Activated CD4-positive, alpha-beta T cell treated with anti-CD3 and anti-CD28 coated beads, Interleukin-2, amount 10 ng/mL, durations not matched to agents 7 days and 5 days (primary cell): ENCODE measurements at regions of chr11 and their contacts with region 1.

Region 1: GRCh38 chr11:67401495-67402191 is at the start of gene PPP1CA:
- DNase-seq: peak; percentile 90
- H3K4me3 Mint-ChIP-seq: peak within 1 kb of the TSS; percentile 95
- H3K27ac Mint-ChIP-seq: peak within 1 kb of the TSS; percentile 97
- H3K4me1 Mint-ChIP-seq: peaks cover 61% of the 10 kb centered on the region
- H3K27me3 Mint-ChIP-seq: no peaks in the 10 kb centered on the region
- total RNA-seq, gene PPP1CA: 301 to 331 TPM

Region 2: DNA sequence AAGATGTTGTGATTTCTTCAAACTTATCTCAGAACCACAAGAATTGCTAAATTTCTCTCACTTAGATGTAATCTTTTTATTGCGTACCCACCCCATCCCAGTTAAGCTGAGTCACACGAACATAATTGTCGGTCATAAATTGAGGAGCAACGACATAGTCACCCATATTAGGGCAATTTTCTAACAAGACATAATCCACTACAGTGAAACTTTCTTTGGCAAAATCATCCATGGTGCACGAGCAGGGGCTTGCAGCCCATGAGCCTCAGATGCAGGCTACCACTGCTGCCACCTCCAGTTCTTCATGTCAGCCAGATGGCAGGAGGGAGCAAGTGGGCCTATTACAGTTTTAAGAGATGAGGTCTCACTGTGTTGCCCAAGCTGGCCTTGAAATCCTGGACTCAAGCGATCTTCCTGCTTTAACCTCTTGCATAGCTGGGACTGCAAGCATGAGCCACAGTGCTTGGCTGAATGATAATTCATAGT is 205.6 kb before region 1 on chr11:
- CTCF ChIA-PET with region 1: no interaction called
- POLR2A ChIA-PET with region 1: no interaction called
- DNase-seq: no peak
- H3K4me3 Mint-ChIP-seq: no peak overlapping the region
- H3K27ac Mint-ChIP-seq: no peak overlapping the region
- H3K4me1 Mint-ChIP-seq: peaks cover 4% of the 10 kb centered on the region
- H3K27me3 Mint-ChIP-seq: no peaks in the 10 kb centered on the region

Region 3: DNA sequence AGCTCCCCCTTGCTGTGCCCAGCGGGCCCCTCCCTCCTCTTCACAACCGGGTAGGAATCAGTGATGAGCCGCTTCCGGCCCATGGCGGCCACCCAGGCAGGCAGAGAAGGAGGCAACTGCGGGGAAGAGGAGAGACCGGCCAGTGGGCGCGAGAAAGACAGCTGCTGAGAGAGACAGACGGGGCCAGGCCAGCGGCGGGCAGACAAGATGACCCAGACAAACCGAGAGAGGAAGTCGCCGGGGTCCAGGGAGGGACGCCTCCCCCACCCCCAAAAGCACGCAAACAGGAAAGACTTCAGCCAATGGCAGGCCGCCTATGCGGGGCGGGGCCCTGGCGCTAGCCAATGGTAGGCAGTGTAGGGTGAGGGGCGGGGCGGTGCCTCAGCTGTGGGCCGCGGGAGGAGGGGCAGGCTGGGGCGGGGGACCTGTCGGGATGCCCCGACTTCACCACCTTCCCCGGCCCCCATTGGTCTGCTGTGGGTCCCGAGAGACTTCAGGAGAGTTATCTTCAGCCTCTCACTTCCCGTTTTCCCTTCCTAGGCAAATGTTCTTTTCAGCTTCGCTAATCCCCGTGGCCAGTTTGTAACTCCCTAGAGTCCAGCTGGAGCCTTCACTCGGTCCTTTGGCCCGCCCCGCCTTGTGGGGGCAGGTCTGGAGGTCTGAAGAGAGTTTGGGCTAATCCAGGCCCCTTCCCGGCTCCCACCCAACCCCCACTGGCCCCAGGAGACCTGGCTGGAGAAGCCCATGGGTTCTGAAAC is 48.1 kb before region 1 on chr11 and contains the start of gene POLD4:
- CTCF ChIA-PET with region 1: interaction called, 841 read pairs
- POLR2A ChIA-PET with region 1: interaction called, 5 read pairs
- DNase-seq: peak; percentile 97
- H3K4me3 Mint-ChIP-seq: peak within 1 kb of the TSS; percentile 89
- H3K27ac Mint-ChIP-seq: peak within 1 kb of the TSS; percentile 99
- H3K4me1 Mint-ChIP-seq: peaks cover 36% of the 10 kb centered on the region
- H3K27me3 Mint-ChIP-seq: peaks cover 8% of the 10 kb centered on the region
- total RNA-seq, gene POLD4: 52.7 to 53.7 TPM

Region 4: DNA sequence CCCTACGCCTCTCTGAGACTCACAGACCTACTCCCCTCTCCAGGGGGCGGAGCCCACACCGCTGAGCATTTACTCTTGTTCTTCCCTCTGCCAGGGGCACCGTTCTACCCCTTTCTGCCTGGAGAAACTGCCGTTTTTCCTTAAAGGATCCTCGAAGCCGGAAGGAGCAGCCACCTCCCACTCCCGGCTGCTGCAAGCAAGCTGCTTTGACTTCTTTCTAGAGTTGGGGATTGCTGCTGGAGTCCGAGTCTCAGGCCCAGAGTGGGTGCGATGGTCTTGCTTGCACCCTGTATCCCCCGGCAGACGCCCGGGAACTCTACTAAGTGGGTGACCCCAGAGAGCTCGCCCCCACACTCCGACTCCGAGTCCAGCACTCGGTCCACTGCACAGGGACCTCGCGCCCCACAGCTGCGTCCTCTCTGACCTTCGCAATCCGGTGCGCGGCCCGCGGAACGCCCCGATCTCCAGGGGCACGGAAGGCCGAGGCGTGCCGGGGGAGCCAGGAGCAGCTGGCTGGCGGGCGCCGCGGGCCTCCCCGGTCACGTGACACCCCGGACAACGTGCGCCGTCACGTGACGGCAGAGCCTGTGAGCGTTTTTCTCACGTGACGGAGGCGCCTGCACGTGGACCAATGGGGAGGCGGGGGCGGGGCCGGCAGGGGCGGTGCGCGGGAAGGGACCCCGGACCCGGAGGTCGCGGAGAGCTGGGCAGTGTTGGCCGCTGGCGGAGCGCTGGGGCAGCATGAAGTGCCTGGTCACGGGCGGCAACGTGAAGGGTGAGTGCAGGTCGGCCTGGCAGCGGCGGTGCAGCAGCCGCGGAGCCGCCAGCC is 10.1 kb before region 1 on chr11 and contains the start of gene RAD9A:
- CTCF ChIA-PET with region 1: interaction called, 40 read pairs
- POLR2A ChIA-PET with region 1: interaction called, 6 read pairs
- DNase-seq: peak; percentile 94
- H3K4me3 Mint-ChIP-seq: peak within 1 kb of the TSS; percentile 91
- H3K27ac Mint-ChIP-seq: peak within 1 kb of the TSS; percentile 78
- H3K4me1 Mint-ChIP-seq: peaks cover 38% of the 10 kb centered on the region
- H3K27me3 Mint-ChIP-seq: peaks cover 2% of the 10 kb centered on the region
- total RNA-seq, gene RAD9A: 49.3 to 53.7 TPM

Region 5: DNA sequence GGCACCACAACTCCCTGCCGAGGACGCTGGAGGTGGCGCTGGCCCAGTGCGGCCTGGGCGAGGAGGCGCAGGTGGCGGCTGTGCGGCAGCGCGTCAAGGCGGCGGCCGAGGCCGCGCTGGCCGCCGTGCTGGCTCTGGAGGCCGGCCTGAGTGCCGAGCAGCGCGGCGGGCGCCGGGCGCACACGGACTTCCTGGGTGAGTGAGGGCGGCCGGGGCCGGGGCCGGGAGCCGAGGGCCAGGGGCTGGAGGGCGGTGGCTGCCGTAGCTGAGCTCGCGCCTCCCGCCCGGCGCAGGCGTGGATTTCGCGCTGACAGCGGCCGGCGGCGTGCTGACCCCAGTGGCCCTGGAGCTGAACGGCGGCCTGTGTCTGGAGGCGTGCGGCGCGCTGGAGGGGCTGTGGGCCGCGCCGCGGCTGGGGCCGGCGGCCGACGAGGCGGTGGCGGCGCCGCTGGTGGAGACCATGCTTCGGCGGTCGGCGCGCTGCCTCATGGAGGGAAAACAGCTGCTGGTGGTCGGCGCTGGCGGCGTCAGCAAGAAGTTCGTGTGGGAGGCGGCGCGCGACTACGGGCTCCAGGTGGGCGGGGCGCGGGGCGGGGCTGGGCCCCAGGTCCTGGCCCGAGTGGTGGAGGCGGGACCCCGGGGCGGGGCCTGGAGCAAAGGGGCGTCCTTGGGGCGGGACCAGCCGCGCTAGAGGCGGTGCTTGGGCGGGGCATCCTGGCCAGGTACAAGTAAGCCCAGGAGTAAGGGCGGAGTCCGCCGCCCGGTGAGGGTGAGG is 19.2 kb after region 1 on chr11:
- CTCF ChIA-PET with region 1: interaction called, 10 read pairs
- POLR2A ChIA-PET with region 1: no interaction called
- DNase-seq: peak; percentile 96
- H3K4me3 Mint-ChIP-seq: peak overlapping the region; percentile 74
- H3K27ac Mint-ChIP-seq: peak overlapping the region; percentile 87
- H3K4me1 Mint-ChIP-seq: peaks cover 62% of the 10 kb centered on the region
- H3K27me3 Mint-ChIP-seq: no peaks in the 10 kb centered on the region

Region 6: DNA sequence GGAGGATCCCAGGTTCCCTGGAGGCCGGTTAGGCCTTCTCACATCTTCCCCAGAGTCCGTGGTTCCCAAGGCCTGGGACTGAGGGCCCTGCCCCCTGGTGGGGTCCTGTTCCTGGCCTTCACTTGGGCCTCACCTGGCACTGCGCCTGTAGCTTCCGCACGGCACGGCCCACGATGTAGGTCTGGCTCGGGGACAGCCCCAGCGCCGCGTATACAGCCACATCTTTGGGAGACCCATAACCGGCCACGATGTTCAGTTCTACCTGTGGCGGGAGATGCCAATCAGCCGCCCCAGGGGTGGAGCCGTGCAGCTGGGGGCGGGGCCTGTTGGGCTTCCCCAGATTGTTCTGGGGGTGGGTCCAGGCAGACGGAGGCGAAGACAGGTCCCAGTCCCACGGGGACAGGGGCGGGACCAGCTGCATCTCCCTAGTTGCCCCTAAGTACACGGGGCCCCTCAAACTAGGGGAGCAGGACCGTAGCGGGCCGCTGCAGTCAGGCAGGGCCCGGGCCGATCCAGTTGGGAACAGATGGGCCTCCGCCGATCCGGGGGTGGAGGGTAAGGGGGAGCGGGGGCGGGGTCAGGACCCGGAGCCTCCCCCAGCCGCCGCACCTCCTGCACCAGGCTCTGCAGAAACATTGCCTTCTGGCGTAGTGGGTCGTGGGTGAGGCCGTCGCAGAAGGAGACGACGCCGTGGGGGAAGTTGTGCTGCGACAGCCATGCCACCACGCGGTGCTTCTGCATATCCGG is 91.3 kb after region 1 on chr11:
- CTCF ChIA-PET with region 1: interaction called, 11 read pairs
- POLR2A ChIA-PET with region 1: no interaction called
- DNase-seq: no peak
- H3K4me3 Mint-ChIP-seq: no peak overlapping the region
- H3K27ac Mint-ChIP-seq: no peak overlapping the region
- H3K4me1 Mint-ChIP-seq: peaks cover 12% of the 10 kb centered on the region
- H3K27me3 Mint-ChIP-seq: no peaks in the 10 kb centered on the region